CD8-positive, alpha-beta T cell (primary cell): ENCODE measurements at regions of chr16 and their contacts with region 1.

Region 1: DNA sequence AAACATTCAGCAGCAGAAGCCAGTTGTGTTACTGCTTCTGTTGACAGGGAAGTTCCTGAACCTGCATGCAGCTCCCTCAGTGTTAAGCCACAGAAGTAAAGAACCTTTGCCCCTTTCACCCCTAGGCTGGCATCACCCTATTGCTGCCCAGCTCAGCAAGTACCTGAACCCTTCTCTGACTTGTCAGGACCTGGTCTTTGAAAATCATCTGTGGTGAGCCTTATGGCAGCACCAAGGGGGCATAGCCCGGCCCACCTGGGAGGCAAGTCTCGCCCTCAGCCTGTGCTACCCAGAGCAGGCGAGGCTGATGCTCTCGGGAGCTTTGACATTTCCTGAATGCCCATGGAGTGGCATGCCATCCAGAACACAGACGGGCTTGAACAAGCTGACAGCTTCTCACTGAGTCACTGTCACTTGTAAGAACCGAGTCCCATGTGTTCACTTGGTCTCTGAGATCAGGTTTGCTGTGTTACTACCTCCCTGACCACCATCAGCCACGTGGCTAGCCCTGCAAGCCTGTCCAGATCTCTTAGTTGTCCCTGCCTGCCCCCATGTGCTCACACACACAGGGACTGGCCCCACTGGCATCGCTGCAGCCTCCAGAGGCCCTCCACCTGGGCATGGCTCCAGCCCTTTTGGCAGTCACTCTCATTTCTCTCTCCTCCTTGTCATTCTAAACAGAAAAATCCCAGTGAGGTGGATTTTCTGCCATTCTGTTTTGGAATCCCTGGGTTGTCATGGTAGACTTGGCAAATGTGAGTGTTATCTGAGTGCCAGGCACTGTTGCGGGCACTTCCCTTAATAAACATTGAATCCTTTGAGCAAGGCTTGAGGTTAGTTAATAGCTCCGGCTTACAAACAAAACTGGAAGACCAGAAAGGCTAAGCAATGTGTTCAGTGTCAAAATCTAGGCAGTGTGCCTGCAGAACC is 2.9 kb upstream of the CARMIL2 start:
- DNase-seq: no peak
- ATAC-seq: no peak
- H3K4me3 ChIP-seq: no peak overlapping the region
- H3K4me3 Mint-ChIP-seq: no peak overlapping the region
- H3K27ac ChIP-seq: no peak overlapping the region
- H3K27ac Mint-ChIP-seq: no peak overlapping the region
- H3K4me1 ChIP-seq: peaks cover 26% of the 10 kb centered on the region
- H3K4me1 Mint-ChIP-seq: peaks cover 9% of the 10 kb centered on the region
- H3K27me3 ChIP-seq: no peaks in the 10 kb centered on the region
- H3K27me3 Mint-ChIP-seq: no peaks in the 10 kb centered on the region
- CTCF ChIP-seq: no peak

Region 2: DNA sequence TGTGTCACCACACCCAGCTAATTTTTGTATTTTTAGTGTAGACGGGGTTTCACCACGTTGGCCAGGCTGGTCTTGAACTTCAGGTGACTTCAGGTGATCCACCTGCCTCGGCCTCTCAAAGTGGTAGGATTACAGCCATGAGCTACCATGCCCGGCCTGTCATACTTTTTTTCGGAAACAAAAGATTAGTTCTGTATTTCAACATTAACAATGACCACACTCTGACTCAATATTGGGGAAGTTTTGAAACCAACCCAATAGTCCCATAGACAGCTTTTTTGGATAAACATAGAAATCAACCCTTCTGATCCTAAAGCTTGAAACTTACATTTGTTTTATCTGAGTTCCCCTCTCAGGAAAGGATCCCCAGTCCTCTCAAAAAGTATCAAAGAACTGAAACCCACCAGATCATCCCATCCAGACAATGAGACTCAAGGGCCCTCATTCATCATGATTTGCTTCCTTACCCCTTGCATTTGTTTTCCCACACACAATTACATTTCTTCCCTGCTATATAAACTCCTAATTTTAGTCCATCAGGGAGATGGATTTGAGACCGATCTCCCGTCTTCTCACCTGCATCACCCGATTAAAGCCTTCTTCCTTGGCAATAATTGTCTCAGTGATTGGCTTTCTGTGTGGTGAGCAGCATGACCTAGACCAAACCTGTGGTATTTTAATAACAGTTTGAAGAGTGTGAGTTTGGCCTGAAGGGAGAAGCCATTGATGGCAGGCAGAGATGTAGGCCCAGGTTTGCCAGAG is 151.5 kb before region 1 on chr16:
- CTCF ChIA-PET with region 1: interaction called, 12 read pairs
- POLR2A ChIA-PET with region 1: no interaction called
- intact Hi-C with region 1: loop called in 1 of 2 experiments (anchors 1 kb)
- DNase-seq: no peak
- ATAC-seq: no peak
- H3K4me3 ChIP-seq: no peak overlapping the region
- H3K4me3 Mint-ChIP-seq: no peak overlapping the region
- H3K27ac ChIP-seq: no peak overlapping the region
- H3K27ac Mint-ChIP-seq: no peak overlapping the region
- H3K4me1 ChIP-seq: no peaks in the 10 kb centered on the region
- H3K4me1 Mint-ChIP-seq: peaks cover 10% of the 10 kb centered on the region
- H3K27me3 ChIP-seq: no peaks in the 10 kb centered on the region
- H3K27me3 Mint-ChIP-seq: no peaks in the 10 kb centered on the region
- CTCF ChIP-seq: no peak

Region 3: DNA sequence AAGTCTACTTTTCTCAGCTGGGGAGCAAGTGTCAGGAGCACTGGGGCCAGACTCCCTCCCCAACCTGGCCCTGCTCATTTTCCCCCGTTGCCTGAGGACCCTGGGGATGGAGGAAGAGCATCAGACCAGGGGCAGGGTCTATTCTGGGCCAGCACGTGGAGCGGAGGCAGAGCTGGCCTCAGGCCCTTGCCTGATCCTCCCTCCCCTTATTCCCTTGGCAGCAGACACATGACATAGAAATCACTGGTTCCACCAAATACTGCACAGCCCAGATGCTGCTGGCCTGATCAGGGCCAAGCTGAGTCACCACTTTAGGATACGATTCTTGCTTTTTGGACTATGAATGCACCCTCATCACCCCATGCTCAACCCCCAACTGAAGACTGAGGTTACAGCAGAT is 142.9 kb before region 1 on chr16:
- CTCF ChIA-PET with region 1: interaction called, 6 read pairs
- POLR2A ChIA-PET with region 1: interaction called, 6 read pairs
- intact Hi-C with region 1: loop called in 1 of 2 experiments (anchors 1 kb)
- DNase-seq: no peak
- ATAC-seq: no peak
- H3K4me3 ChIP-seq: no peak overlapping the region
- H3K4me3 Mint-ChIP-seq: no peak overlapping the region
- H3K27ac ChIP-seq: peak overlapping the region in 1 of 2 experiments; percentile 8
- H3K27ac Mint-ChIP-seq: no peak overlapping the region
- H3K4me1 ChIP-seq: peaks cover 10% of the 10 kb centered on the region
- H3K4me1 Mint-ChIP-seq: peaks cover 13% of the 10 kb centered on the region
- H3K27me3 ChIP-seq: no peaks in the 10 kb centered on the region
- H3K27me3 Mint-ChIP-seq: no peaks in the 10 kb centered on the region
- CTCF ChIP-seq: no peak

Region 4: GRCh38 chr16:67537270-67537635 is 104.8 kb before region 1 on chr16:
- CTCF ChIA-PET with region 1: interaction called, 34 read pairs
- POLR2A ChIA-PET with region 1: interaction called, 8 read pairs
- intact Hi-C with region 1: loop called in 1 of 2 experiments (anchors 2 kb)
- DNase-seq: peak in 6 of 9 experiments; percentile 38 to 77 (median 58)
- ATAC-seq: peak; percentile 51
- H3K4me3 ChIP-seq: peak overlapping the region; percentile 83 to 85
- H3K4me3 Mint-ChIP-seq: peak overlapping the region; percentile 84
- H3K27ac ChIP-seq: peak overlapping the region; percentile 37 to 75
- H3K27ac Mint-ChIP-seq: peak overlapping the region; percentile 82
- H3K4me1 ChIP-seq: peaks cover 17% of the 10 kb centered on the region
- H3K4me1 Mint-ChIP-seq: peaks cover 33% of the 10 kb centered on the region
- H3K27me3 ChIP-seq: no peaks in the 10 kb centered on the region
- H3K27me3 Mint-ChIP-seq: no peaks in the 10 kb centered on the region
- CTCF ChIP-seq: no peak

Region 5: GRCh38 chr16:67555795-67556212 is 86.2 kb before region 1 on chr16:
- CTCF ChIA-PET with region 1: interaction called, 46 read pairs
- POLR2A ChIA-PET with region 1: interaction called, 5 read pairs
- intact Hi-C with region 1: no loop called
- DNase-seq: peak in 2 of 9 experiments; percentile 59 to 74
- ATAC-seq: peak; percentile 94
- H3K4me3 ChIP-seq: peak overlapping the region in 1 of 2 experiments; percentile 0
- H3K4me3 Mint-ChIP-seq: peak overlapping the region; percentile 47
- H3K27ac ChIP-seq: peak overlapping the region; percentile 44 to 73
- H3K27ac Mint-ChIP-seq: peak overlapping the region; percentile 88
- H3K4me1 ChIP-seq: peaks cover 35% of the 10 kb centered on the region
- H3K4me1 Mint-ChIP-seq: peaks cover 54% of the 10 kb centered on the region
- H3K27me3 ChIP-seq: no peaks in the 10 kb centered on the region
- H3K27me3 Mint-ChIP-seq: no peaks in the 10 kb centered on the region
- CTCF ChIP-seq: no peak

Region 6: DNA sequence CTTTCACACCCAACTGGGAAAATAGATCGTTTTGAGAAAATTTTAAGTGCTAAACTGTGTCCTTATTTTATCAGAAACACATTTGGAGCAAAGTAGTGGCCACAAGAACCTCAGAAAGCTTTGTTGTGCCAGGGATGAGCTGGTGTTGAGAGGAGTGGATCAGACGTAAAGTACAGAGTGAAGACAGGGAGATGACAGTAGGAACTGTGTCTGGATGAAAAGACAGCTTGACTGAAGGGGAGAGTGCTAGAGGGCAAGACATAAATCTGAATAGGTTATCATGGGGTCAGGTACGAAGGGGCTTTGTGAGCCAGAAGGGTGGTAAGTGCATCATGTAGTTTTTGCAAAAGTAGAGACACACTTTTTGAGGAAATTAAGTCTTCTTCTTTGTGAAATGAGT is 36.4 kb before region 1 on chr16:
- CTCF ChIA-PET with region 1: no interaction called
- POLR2A ChIA-PET with region 1: no interaction called
- intact Hi-C with region 1: no loop called
- DNase-seq: no peak
- ATAC-seq: no peak
- H3K4me3 ChIP-seq: no peak overlapping the region
- H3K4me3 Mint-ChIP-seq: no peak overlapping the region
- H3K27ac ChIP-seq: no peak overlapping the region
- H3K27ac Mint-ChIP-seq: peak overlapping the region; percentile 12
- H3K4me1 ChIP-seq: peaks cover 3% of the 10 kb centered on the region
- H3K4me1 Mint-ChIP-seq: peaks cover 33% of the 10 kb centered on the region
- H3K27me3 ChIP-seq: no peaks in the 10 kb centered on the region
- H3K27me3 Mint-ChIP-seq: no peaks in the 10 kb centered on the region
- CTCF ChIP-seq: no peak

Region 7: DNA sequence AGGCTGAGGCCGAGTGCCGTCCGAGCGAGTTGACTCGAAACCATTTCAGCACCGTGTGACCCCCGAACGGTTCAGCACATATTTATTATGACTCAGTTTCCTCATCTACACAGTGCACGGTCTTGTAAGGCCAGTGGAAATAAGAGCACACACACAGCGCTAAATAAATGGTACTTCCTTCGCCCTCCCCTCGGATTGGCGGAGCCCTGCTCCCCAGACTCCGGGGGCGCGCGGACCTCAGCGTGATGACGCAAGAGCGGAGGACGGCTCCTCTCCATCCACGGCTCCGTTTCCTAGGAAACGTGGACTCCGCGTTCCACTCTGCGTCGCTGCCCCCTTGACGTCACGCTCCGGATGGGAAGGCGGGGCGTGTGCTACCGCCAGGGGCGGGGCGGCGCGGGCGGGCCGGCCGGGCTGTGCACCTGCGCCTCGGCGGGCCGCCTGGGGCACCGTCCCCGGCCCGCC is 18.6 kb after region 1 on chr16 and contains the start of gene PARD6A:
- CTCF ChIA-PET with region 1: interaction called, 57 read pairs
- POLR2A ChIA-PET with region 1: interaction called, 41 read pairs
- intact Hi-C with region 1: loop called in 1 of 2 experiments (anchors 1 kb)
- DNase-seq: peak; percentile 89 to 99 (median 95)
- ATAC-seq: peak; percentile 76
- H3K4me3 ChIP-seq: peak within 1 kb of the TSS; percentile 83 to 100
- H3K4me3 Mint-ChIP-seq: peak within 1 kb of the TSS; percentile 94
- H3K27ac ChIP-seq: peak within 1 kb of the TSS; percentile 92 to 100
- H3K27ac Mint-ChIP-seq: peak within 1 kb of the TSS; percentile 93
- H3K4me1 ChIP-seq: peaks cover 20% of the 10 kb centered on the region
- H3K4me1 Mint-ChIP-seq: peaks cover 23% of the 10 kb centered on the region
- H3K27me3 ChIP-seq: no peaks in the 10 kb centered on the region
- H3K27me3 Mint-ChIP-seq: no peaks in the 10 kb centered on the region
- CTCF ChIP-seq: no peak
- total RNA-seq, gene PARD6A: 3.0 to 3.1 TPM

Region 8: DNA sequence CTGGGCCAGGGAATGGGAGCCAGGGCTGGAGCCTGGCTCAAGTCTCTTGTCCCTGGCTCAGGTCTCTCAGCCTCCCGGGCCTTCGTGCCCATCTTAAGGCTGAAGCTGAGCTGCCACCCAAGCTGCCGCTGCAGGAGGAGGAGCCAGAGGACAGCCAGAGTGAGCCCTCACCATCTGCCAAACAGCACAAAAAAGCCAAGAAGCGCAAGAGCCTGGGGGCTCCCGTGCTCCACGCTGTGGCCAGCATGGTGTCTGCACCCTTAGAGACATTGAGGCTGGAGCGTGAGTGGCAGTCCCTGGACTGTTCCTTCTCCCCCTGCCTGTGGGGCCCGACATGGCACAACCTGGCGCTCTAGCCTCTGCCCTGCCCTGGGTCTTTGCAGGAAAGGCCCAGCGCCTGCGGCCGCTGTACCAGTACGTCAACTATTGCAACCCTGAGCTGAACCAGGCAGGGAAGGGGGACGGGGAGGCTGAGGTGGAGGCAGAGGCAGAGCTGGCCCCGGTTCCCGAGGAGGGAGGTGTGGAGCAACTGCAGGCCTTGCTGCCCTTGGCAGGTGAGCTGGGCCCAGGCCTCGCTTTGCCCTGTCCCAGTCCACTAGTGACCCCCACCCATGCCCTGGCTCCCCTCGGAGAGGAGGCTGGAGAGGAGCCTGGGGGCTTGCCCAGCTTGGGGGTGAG is 25.9 kb after region 1 on chr16:
- CTCF ChIA-PET with region 1: interaction called, 32 read pairs
- POLR2A ChIA-PET with region 1: interaction called, 14 read pairs
- intact Hi-C with region 1: no loop called
- DNase-seq: peak; percentile 64 to 91 (median 78)
- ATAC-seq: peak; percentile 90
- H3K4me3 ChIP-seq: peak overlapping the region in 1 of 2 experiments; percentile 84
- H3K4me3 Mint-ChIP-seq: peak overlapping the region; percentile 82
- H3K27ac ChIP-seq: peak overlapping the region in 1 of 2 experiments; percentile 38
- H3K27ac Mint-ChIP-seq: no peak overlapping the region
- H3K4me1 ChIP-seq: peaks cover 17% of the 10 kb centered on the region
- H3K4me1 Mint-ChIP-seq: peaks cover 16% of the 10 kb centered on the region
- H3K27me3 ChIP-seq: no peaks in the 10 kb centered on the region
- H3K27me3 Mint-ChIP-seq: no peaks in the 10 kb centered on the region
- CTCF ChIP-seq: peak; percentile 65